HEK293 (cell line): ENCODE measurements at regions of chr5 and their contacts with region 1.

Region 1: DNA sequence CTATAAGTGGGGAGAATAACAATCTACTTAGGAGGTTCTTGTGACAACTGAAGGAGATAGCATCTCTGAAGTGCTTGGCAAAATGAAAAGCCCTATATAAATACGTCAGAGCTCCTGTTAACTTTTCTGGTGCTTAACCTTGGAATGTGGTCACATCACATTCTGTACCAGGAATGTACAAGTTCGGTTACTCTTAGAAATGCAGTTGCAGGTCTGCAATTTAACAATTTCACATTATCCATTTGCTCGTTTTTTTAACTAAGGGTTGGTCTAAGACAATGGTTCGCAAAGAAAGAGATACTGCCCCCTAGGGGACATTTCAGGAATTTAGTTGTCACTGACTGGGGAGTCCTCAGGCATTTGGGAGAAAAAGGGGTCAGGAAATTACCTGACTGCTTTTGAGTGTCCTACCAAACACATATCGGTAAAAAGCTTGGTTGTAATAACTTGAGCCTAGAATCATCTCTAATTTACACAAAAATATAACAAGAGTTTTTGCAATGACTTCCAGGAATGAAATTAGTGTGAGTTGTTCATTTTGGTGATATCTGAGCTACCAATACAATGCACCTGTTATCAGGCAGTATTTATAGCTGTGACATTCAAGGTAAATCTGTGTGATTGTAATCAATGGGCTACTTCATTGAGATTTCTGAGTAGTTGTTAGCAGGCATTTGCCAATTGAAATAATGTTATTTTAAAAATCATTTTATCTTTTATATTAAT is 5.4 kb upstream of the HBEGF start:
- H3K4me3 ChIP-seq: no peak overlapping the region
- H3K27ac ChIP-seq: no peak overlapping the region
- H3K4me1 ChIP-seq: no peaks in the 10 kb centered on the region
- CTCF ChIP-seq: 0 out of 2 replicates have a peak, but pooled peaks have one; percentile 34

Region 2: GRCh38 chr5:140035881-140036280 is 315.9 kb before region 1 on chr5:
- CTCF ChIA-PET with region 1: no interaction called
- POLR2A ChIA-PET with region 1: no interaction called
- H3K4me3 ChIP-seq: no peak overlapping the region
- H3K27ac ChIP-seq: no peak overlapping the region
- H3K4me1 ChIP-seq: peaks cover 21% of the 10 kb centered on the region
- CTCF ChIP-seq: no peak

Region 3: GRCh38 chr5:140227048-140227447 is 124.7 kb before region 1 on chr5:
- CTCF ChIA-PET with region 1: interaction called, 13 read pairs
- POLR2A ChIA-PET with region 1: interaction called, 3 read pairs
- H3K4me3 ChIP-seq: no peak overlapping the region
- H3K27ac ChIP-seq: no peak overlapping the region
- H3K4me1 ChIP-seq: no peaks in the 10 kb centered on the region
- CTCF ChIP-seq: no peak; the same call in 1 of the 2 replicates

Region 4: GRCh38 chr5:140267559-140268018 is 84.2 kb before region 1 on chr5:
- CTCF ChIA-PET with region 1: interaction called, 25 read pairs
- POLR2A ChIA-PET with region 1: interaction called, 17 read pairs
- H3K4me3 ChIP-seq: no peak overlapping the region
- H3K27ac ChIP-seq: no peak overlapping the region
- H3K4me1 ChIP-seq: peaks cover 7% of the 10 kb centered on the region
- CTCF ChIP-seq: no peak

Region 5: DNA sequence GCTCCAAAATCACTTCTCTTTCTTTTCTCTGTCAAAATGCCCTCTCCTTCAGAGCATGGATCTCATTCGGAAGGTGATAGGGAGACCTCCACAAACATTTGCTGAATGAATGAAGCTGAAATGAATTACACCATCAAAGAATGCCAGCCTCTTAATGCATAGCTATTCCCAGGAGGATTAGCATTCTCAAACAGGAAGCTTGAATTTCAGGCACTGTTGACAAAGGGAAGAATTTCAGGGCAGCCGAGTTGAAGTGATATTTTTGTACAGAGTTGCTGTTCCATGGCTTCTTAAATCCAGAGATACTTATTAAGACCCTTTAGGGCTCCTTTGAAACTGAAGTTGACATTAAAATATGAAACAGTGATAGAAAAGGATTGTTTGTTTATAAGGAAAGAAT is 24.2 kb before region 1 on chr5:
- CTCF ChIA-PET with region 1: interaction called, 19 read pairs
- POLR2A ChIA-PET with region 1: interaction called, 37 read pairs
- H3K4me3 ChIP-seq: no peak overlapping the region
- H3K27ac ChIP-seq: no peak overlapping the region
- H3K4me1 ChIP-seq: peaks cover 10% of the 10 kb centered on the region
- CTCF ChIP-seq: no peak

Region 6: DNA sequence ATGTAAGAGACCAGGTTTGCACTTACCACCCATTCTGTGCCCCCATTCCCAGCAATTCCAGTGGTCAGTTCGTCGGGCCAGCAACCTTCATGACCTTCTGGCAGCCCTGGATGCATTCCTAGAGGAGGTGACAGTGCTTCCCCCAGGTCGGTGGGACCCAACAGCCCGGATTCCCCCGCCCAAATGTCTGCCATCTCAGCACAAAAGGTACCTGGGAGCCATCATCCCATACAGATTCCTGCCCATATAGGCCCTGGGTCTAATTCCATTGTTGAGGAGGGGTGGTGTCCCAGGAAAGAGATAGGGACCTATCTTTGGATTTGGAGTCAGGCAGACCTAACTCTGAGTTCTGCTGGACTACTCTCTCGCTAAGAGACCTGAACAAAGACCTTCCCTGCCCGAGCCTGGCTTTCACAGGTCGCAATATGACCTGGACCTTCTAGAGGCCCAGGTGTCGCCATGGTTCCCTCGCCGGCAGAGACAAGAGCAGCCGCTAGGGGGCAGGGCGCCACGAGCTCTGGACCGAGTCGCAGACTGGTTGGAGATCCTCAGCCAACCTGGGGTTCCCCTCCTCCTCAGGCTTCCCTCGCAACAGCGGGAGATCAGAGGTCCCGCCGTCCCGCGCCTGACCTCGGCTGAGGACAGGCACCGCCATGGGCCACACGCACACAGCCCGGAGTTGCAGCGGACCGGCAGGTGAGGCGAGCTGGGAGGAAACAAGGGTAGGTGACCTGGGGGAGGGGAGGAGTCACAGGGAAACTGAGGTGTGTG is 11.3 kb after region 1 on chr5:
- CTCF ChIA-PET with region 1: interaction called, 88 read pairs
- POLR2A ChIA-PET with region 1: interaction called, 11 read pairs
- H3K4me3 ChIP-seq: peak overlapping the region; percentile 33
- H3K27ac ChIP-seq: no peak overlapping the region; the same call in 1 of the 2 replicates
- H3K4me1 ChIP-seq: no peaks in the 10 kb centered on the region
- CTCF ChIP-seq: peak; percentile 94